Esophagus muscularis mucosa (tissue), 4 donors: ENCODE measurements at regions of chrX and their contacts with region 1.

Region 1: DNA sequence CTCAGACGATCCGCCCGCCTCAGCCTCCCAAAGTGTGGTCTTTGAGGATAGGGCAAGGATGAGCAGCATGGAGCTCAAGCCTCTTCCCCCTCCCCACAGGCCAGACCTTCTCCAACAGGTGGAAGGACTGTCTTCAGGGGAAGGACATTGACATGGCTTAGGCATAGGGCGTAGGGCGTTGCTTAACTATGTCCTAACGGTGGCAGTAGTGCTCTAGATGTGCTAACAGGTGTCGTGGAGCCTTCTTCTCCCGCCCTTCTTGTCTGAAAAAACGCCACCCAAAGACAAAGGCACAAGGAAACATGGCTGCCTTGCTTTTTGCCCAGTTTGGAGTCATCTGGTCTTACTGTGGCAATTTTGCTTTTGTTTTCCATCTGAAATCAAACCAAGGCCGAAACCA is 219.8 kb downstream of the OR13H1 start:
- DNase-seq: no peak
- H3K4me3 ChIP-seq: peak overlapping the region in 2 of 4 donors; percentile 47 to 54
- H3K27ac ChIP-seq: peak overlapping the region in 2 of 4 donors; percentile 31 to 53
- H3K4me1 ChIP-seq: peaks cover 0 to 20% (median 5%) of the 10 kb centered on the region in 4 donors
- H3K27me3 ChIP-seq: no peaks in the 10 kb centered on the region
- CTCF ChIP-seq: peak in 2 of 3 experiments; percentile 45 to 57
- EP300 ChIP-seq: no peak
- POLR2A ChIP-seq: no peak

Region 2: GRCh38 chrX:131704136-131704695 is 59.5 kb before region 1 on chrX:
- intact Hi-C with region 1: loop called (anchors 10 kb)
- DNase-seq: no peak
- H3K4me3 ChIP-seq: peak overlapping the region in 2 of 4 donors; percentile 55 to 64
- H3K27ac ChIP-seq: peak overlapping the region in 2 of 4 donors; percentile 66 to 71
- H3K4me1 ChIP-seq: peaks cover 0 to 13% (median 0%) of the 10 kb centered on the region in 4 donors
- H3K27me3 ChIP-seq: no peaks in the 10 kb centered on the region
- CTCF ChIP-seq: peak in 2 of 3 experiments; percentile 44 to 48
- EP300 ChIP-seq: no peak
- POLR2A ChIP-seq: no peak

Region 3: GRCh38 chrX:131783555-131784308 is 20.1 kb after region 1 on chrX:
- intact Hi-C with region 1: no loop called
- DNase-seq: no peak
- H3K4me3 ChIP-seq: peak overlapping the region in 2 of 4 donors; percentile 31 to 43
- H3K27ac ChIP-seq: peak overlapping the region in 1 of 4 donors; percentile 13
- H3K4me1 ChIP-seq: peaks cover 0 to 6% (median 0%) of the 10 kb centered on the region in 4 donors
- H3K27me3 ChIP-seq: no peaks in the 10 kb centered on the region
- CTCF ChIP-seq: peak in 2 of 3 experiments; percentile 56 to 57
- EP300 ChIP-seq: no peak
- POLR2A ChIP-seq: no peak

Region 4: GRCh38 chrX:131812836-131813825 is 49.5 kb after region 1 on chrX:
- intact Hi-C with region 1: loop called (anchors 10 kb)
- DNase-seq: no peak
- H3K4me3 ChIP-seq: peak overlapping the region; percentile 27 to 60 (median 42)
- H3K27ac ChIP-seq: peak overlapping the region in 3 of 4 donors; percentile 54 to 75 (median 58)
- H3K4me1 ChIP-seq: peaks cover 0 to 8% (median 2%) of the 10 kb centered on the region in 4 donors
- H3K27me3 ChIP-seq: no peaks in the 10 kb centered on the region
- CTCF ChIP-seq: peak in 2 of 3 experiments; percentile 47 to 49
- EP300 ChIP-seq: no peak
- POLR2A ChIP-seq: no peak

Region 5: DNA sequence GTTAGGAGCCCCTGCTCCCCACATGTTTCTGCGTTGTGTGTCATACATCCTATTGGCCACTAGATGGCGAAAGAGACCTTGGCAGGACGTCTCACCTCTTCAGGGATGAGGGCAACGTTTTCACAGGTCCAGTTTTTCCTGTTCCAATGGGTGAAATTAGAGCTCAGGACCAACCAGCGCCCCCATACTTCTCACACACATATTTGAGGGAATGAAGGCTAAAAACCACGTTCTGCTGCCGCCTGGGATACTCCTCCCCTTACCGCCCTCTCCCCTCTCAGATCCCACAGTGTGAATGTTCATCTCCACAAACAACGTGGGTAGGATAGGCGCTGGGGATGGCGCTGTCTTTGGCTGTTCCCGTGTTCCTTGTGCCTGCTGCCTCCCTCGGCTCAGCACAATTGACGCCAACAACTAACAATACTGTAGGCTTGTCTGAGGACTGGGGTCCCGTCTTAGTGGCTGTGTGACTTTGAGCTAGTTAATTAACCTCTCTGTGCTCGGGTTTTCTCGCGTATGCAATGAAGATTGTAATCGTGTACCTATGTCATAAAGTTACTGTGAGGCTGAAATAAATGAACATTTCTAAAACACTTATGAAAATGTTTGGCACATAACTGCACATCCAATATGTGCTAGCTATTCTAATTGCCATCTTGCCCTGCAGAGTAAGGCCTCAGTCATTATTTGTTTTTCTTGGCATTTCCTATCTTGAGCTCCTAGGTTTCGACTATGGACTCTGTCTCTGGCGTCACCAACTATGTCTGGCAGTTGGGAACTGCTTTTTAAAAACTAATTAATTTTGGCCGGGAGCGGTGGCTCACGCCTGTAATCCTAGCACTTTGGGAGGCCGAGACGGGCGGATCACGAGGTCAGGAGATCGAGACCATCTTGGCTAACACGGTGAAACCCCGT is 78.1 kb after region 1 on chrX:
- intact Hi-C with region 1: no loop called
- DNase-seq: no peak
- H3K4me3 ChIP-seq: no peak overlapping the region
- H3K27ac ChIP-seq: no peak overlapping the region
- H3K4me1 ChIP-seq: peaks cover 0 to 7% (median 2%) of the 10 kb centered on the region in 4 donors
- H3K27me3 ChIP-seq: no peaks in the 10 kb centered on the region
- CTCF ChIP-seq: peak; percentile 68 to 90 (median 72)
- EP300 ChIP-seq: no peak
- POLR2A ChIP-seq: no peak

Region 6: DNA sequence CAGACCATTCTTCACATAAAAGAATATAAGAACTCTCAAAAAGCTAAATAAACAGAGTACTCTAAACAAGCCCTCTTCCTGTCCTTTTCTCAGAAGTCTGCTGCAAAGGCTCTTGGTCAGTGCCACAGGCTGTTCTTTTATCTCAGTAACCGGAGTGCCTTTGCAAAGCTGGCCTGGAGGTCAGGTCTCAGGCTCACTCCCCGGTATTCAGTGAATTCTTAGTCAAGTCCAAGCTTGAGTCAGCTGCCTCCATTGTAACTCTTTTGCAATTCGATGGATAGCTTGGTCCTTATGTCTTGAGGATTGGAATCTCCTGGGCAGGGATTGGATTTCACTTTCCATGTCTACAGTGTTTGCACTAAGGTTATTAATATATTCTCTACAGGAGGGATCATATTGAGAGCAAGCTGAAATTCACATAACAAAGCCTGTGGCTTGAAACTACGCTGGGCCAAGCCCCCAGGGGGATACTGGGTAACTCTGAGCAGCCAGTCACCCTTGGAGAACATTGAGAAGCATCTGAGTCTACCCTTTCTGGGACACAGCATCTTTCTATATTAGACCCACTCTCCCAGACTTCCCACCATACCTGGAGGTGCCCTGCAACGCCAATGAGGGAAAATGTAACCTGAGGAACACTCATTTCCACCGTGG is 1204.7 kb after region 1 on chrX:
- intact Hi-C with region 1: no loop called
- DNase-seq: peak; percentile 5
- H3K4me3 ChIP-seq: no peak overlapping the region
- H3K27ac ChIP-seq: no peak overlapping the region
- H3K4me1 ChIP-seq: no peaks in the 10 kb centered on the region
- H3K27me3 ChIP-seq: no peaks in the 10 kb centered on the region
- CTCF ChIP-seq: no peak
- EP300 ChIP-seq: no peak
- POLR2A ChIP-seq: no peak